ENCODE measurements at regions of chr11 and their contacts with region 1.

Region 1: DNA sequence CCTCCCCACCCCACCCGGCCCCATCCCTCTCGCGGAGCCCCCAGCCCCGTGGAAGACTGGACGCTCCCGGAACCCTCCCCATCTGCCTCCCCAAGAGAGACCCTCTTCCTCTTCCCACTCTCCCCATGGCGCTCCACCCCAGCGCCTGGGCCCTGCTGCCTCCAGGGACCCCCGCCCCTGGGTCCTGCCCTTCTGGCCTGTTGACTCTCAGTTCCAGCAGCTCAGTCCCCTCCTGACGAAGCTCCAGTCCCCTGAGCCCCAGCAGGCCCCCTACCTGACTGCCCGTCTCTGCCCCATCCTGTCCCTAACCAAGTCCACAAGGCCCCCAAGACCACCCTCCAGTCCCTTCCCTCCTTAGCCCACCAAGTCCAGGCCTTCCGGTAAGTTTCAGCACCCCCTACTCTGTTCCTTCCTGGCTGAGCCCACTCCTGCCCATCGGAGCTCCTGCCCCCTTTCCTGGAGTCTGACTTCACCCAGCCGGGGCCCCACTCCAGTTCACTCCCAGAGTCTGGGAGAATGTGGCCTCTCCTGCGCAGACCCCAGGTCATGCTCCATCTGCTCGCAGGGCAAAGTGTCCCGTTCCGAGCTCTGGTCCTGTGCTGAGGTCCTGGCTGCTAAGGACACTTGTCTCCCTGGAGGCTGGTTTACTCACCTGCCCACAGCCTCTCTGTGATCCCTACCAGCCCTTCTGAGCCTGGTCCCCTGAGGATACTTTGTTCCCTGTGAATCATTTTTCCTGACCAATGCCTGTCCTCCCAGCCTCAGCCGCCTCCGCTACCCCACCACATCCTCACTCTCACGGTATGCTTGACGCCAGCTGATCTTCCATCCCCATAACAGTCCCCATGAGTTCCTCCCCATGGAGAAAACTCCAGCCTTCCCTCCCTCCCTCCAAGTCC is 732 bp downstream of the IFITM10 start:
- DNase-seq: peak in 1 of 3 donors; percentile 43
- ATAC-seq: peak; percentile 1 to 7 (median 4)
- H3K4me3 ChIP-seq: peak overlapping the region; percentile 36 to 45 (median 42)
- H3K27ac ChIP-seq: peak overlapping the region; percentile 33 to 69 (median 44)
- H3K4me1 ChIP-seq: peaks cover 0 to 8% (median 0%) of the 10 kb centered on the region in 4 donors
- H3K27me3 ChIP-seq: no peaks in the 10 kb centered on the region
- CTCF ChIP-seq: no peak
- POLR2A ChIP-seq: no peak

Region 2: GRCh38 chr11:1652771-1653540 is 96.7 kb before region 1 on chr11:
- intact Hi-C with region 1: loop called in 1 of 2 experiments (anchors 10 kb)
- DNase-seq: peak; percentile 82 to 85 (median 83)
- ATAC-seq: peak; percentile 68 to 86 (median 76)
- H3K4me3 ChIP-seq: peak overlapping the region in 1 of 3 donors; percentile 13
- H3K27ac ChIP-seq: peak overlapping the region; percentile 47 to 88 (median 49)
- H3K4me1 ChIP-seq: peaks cover 0 to 38% (median 22%) of the 10 kb centered on the region in 4 donors
- H3K27me3 ChIP-seq: no peaks in the 10 kb centered on the region
- CTCF ChIP-seq: peak; percentile 94 to 99 (median 98)
- POLR2A ChIP-seq: no peak

Region 3: DNA sequence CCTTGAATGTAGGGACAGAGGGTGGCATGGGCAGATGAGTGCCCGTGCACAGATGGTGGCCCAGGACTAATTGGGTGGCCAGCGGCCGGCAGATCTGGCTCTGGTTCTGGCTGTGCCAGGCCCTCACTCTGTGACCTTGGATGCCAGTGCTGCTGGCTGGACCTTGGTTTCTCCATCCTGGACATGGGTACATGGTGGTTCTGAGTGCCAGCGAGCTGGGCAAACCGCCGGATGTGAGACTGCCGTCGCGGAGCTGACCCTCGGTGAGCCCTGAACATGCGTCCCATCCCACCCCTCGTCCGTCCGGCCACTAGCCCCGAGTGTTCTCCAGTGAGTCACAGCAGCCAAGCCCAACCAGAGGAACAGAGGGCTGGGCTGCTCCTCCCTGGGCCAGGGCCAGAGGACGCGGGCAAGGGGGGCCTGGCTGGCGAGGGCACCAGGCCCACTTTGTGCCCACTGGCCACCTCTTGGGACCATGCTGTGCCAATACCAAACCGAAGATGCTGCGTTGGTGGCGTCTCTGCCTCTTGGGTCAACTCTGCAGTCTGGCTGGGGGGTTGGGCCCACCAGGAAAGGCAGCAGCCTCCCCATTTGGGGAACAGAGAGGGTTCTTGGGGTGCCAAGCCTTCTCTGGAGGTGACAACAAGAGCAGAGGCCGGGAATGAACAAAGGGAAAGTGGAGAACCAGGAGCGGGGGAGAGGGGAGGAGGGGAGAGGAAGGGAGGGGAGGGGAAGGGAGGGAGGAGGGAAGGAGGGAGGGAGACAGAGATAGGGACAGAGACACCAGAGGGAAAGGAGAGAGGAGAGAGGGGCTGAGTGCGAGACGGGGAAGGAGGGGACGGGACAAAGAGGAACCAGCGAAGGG is 113.9 kb after region 1 on chr11:
- intact Hi-C with region 1: no loop called
- DNase-seq: peak in 2 of 3 donors; percentile 69 to 75
- ATAC-seq: peak; percentile 67 to 88 (median 81)
- H3K4me3 ChIP-seq: no peak overlapping the region
- H3K27ac ChIP-seq: peak overlapping the region in 1 of 3 donors; percentile 43
- H3K4me1 ChIP-seq: no peaks in the 10 kb centered on the region
- H3K27me3 ChIP-seq: no peaks in the 10 kb centered on the region
- CTCF ChIP-seq: no peak
- POLR2A ChIP-seq: no peak

Region 4: DNA sequence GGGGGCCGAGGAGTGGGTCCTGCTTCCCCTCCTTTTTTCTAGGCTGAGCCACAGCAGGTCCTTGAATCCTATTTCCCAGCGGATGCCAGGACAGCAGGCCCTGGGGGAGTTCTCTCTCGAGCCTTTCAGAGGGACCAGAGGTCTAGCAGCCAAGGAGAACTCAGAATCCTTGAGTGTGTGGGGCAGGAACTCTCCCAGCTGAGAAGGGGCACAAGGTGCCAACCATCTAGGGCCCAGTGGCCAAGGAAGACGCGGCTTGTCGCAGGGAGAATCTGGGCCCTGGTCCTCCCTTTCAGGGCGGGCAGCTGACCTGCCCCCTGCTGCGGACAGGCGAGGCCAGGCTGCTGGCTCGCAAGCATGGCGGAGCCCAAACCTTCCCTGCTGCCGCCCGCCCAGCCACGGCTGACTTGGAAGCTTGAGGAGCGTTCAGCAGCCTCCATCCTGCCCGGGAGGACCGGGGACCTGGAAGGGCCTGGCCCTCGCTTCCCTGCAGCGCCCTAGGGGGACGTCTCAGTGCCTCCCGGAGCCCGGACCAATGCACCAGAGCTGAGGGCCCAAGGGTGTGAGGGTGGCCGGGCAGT is 649.9 kb after region 1 on chr11:
- intact Hi-C with region 1: loop called in 1 of 2 experiments (anchors 10 kb)
- DNase-seq: no peak
- ATAC-seq: peak; percentile 0 to 11 (median 2)
- H3K4me3 ChIP-seq: peak overlapping the region; percentile 45 to 100 (median 72)
- H3K27ac ChIP-seq: peak overlapping the region; percentile 94 to 95 (median 94)
- H3K4me1 ChIP-seq: peaks cover 0 to 21% (median 7%) of the 10 kb centered on the region in 4 donors
- H3K27me3 ChIP-seq: no peaks in the 10 kb centered on the region
- CTCF ChIP-seq: no peak
- POLR2A ChIP-seq: no peak